WTC11 (cell line): ENCODE measurements at regions of chr15 and their contacts with region 1.

Region 1: DNA sequence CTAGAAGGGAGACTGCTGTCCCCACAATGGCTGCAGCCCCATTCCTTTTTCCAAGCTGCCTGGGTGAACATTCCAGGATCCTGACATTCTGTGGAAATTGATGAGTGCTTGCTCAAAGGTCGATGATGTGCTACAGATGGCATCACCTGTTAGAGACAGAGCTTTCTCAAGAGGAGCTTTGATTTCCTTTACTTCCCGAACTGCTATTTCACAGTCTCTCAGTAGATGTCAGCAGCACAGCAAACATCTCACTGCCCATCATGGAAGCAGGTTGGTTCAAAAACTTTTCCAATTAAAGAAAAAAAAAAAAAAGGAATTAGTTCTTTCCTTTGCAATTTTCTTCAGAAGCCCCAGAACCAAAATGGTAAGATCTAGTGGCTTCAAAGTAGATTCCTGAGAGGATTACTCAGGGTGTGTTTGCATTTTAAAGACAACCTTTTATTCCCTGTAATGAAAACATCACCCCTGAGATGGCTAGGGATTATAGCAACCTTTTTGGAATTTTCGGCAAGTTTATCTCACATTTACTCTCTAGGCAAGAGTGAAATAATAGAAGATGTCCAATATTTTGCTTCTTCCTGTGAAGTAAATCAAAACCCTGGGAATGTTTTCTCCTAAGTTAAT is 44.8 kb downstream of the POLR2M start:
- DNase-seq: no peak
- ATAC-seq: peak; percentile 48
- H3K4me3 Mint-ChIP-seq: no peak overlapping the region
- H3K27ac Mint-ChIP-seq: no peak overlapping the region
- H3K4me1 Mint-ChIP-seq: peaks cover 39% of the 10 kb centered on the region
- H3K27me3 Mint-ChIP-seq: peaks cover 4% of the 10 kb centered on the region; the same call in 1 of the 2 replicates
- CTCF ChIP-seq: no peak

Region 2: DNA sequence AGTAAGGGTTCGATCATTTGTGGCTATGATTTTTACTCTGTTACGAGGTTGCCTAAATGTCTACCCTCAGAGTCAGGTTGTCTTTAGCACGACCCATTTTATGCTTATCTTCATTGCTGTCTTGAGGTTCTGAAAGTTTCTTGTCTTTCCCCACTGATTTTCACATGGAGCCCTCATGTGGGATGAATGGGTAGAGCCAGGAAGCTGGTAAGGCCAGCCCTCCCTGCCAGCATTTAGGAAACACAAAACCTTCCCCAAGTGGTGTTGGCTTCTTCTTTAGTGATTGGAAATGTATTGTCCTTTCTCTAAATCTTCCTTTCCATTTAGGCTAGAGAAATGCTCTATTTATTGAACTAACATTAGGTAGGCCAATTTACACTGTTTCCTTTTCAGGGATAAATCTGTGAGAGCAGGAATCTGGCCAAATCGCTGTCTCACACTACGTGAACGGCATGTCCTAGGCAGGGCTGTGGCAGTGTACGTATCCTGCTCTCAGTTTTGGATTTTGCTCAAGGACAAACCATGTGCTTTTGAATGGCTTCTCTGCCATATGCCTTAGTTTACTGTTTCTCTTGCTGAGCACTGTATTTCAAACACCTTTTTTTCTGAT is 115.9 kb before region 1 on chr15:
- CTCF ChIA-PET with region 1: no interaction called
- POLR2A ChIA-PET with region 1: no interaction called
- DNase-seq: no peak
- ATAC-seq: peak; percentile 58
- H3K4me3 Mint-ChIP-seq: no peak overlapping the region
- H3K27ac Mint-ChIP-seq: no peak overlapping the region
- H3K4me1 Mint-ChIP-seq: no peaks in the 10 kb centered on the region
- H3K27me3 Mint-ChIP-seq: peaks cover 17% of the 10 kb centered on the region
- CTCF ChIP-seq: no peak

Region 3: DNA sequence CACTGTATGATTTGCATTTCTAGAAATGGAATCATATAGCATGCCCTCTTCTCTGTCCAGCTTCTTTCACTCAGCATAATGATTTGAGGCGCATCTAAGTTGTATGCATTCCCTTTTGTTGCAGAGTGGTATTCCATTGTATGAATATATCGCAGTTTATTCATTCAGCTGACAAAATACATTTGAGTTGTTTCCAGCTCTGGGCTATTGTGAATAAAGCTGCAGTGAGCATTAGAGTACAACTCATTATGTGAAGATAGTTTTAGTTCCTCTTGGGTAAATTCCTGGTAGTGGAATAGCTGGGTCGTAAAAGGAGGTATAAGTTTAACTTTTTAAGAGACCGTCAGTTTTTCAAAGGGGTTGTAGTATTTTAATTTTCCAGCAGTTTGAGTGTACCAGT is 83.3 kb before region 1 on chr15:
- CTCF ChIA-PET with region 1: no interaction called
- POLR2A ChIA-PET with region 1: no interaction called
- DNase-seq: no peak
- ATAC-seq: no peak
- H3K4me3 Mint-ChIP-seq: no peak overlapping the region
- H3K27ac Mint-ChIP-seq: no peak overlapping the region
- H3K4me1 Mint-ChIP-seq: no peaks in the 10 kb centered on the region
- H3K27me3 Mint-ChIP-seq: no peaks in the 10 kb centered on the region
- CTCF ChIP-seq: no peak

Region 4: DNA sequence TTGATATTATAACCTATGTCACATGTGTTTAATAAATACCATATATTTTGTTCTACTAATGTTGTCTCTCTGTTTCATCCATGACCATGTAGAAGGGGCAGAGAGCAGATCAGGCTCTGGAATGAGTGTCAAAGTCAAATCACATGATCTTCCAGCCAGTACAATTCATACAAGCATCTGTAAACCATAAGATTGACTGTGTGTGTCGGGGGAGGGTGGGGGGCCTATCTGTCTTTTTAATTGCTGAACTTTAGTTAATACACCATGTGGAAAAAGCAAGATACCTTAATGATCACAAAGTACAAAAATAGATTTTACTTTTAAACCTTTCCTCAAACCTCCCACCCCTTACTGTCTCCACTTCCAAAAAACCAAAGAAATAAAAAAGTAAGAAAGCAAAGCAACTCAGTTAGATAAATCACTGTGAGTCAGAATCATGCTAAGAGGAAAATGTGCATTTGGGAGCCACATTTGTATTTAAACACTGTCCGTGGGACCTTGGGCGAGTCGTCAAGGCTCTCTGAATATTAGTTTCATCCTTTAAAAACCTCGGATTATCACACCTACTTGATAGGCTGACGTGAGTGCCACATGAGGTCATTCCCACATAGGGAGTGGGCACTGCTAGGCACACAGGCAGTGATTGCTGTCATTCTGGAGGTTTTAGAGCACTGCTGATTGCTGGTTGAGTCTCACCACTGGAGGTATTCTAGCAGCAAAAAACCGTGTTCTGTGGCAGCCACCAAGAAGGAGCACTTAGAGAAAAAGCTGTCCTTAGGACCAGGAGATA is 65.8 kb before region 1 on chr15:
- CTCF ChIA-PET with region 1: no interaction called
- POLR2A ChIA-PET with region 1: no interaction called
- DNase-seq: no peak
- ATAC-seq: no peak
- H3K4me3 Mint-ChIP-seq: no peak overlapping the region
- H3K27ac Mint-ChIP-seq: no peak overlapping the region
- H3K4me1 Mint-ChIP-seq: no peaks in the 10 kb centered on the region
- H3K27me3 Mint-ChIP-seq: no peaks in the 10 kb centered on the region
- CTCF ChIP-seq: no peak

Region 5: GRCh38 chr15:57697588-57697987 is 53.7 kb before region 1 on chr15:
- CTCF ChIA-PET with region 1: no interaction called
- POLR2A ChIA-PET with region 1: no interaction called
- DNase-seq: no peak
- ATAC-seq: no peak
- H3K4me3 Mint-ChIP-seq: no peak overlapping the region
- H3K27ac Mint-ChIP-seq: no peak overlapping the region
- H3K4me1 Mint-ChIP-seq: no peaks in the 10 kb centered on the region
- H3K27me3 Mint-ChIP-seq: peaks cover 33% of the 10 kb centered on the region
- CTCF ChIP-seq: no peak

Region 6: GRCh38 chr15:57762302-57762701 is 11.0 kb after region 1 on chr15:
- CTCF ChIA-PET with region 1: interaction called, 38 read pairs
- POLR2A ChIA-PET with region 1: no interaction called
- DNase-seq: peak; percentile 28
- ATAC-seq: peak; percentile 75
- H3K4me3 Mint-ChIP-seq: no peak overlapping the region
- H3K27ac Mint-ChIP-seq: no peak overlapping the region
- H3K4me1 Mint-ChIP-seq: no peaks in the 10 kb centered on the region
- H3K27me3 Mint-ChIP-seq: no peaks in the 10 kb centered on the region
- CTCF ChIP-seq: peak; percentile 22; the same call in 1 of the 2 replicates

Region 7: GRCh38 chr15:57861036-57861638 is 109.8 kb after region 1 on chr15:
- CTCF ChIA-PET with region 1: interaction called, 134 read pairs
- POLR2A ChIA-PET with region 1: no interaction called
- DNase-seq: no peak
- ATAC-seq: no peak; the same call in 1 of the 2 replicates
- H3K4me3 Mint-ChIP-seq: no peak overlapping the region
- H3K27ac Mint-ChIP-seq: no peak overlapping the region
- H3K4me1 Mint-ChIP-seq: no peaks in the 10 kb centered on the region
- H3K27me3 Mint-ChIP-seq: no peaks in the 10 kb centered on the region; the same call in 1 of the 2 replicates
- CTCF ChIP-seq: peak; percentile 69

Region 8: GRCh38 chr15:58077427-58077826 is 326.1 kb after region 1 on chr15:
- CTCF ChIA-PET with region 1: interaction called, 11 read pairs
- POLR2A ChIA-PET with region 1: no interaction called
- DNase-seq: no peak
- ATAC-seq: peak; percentile 90
- H3K4me3 Mint-ChIP-seq: no peak overlapping the region
- H3K27ac Mint-ChIP-seq: no peak overlapping the region
- H3K4me1 Mint-ChIP-seq: peaks cover 28% of the 10 kb centered on the region
- H3K27me3 Mint-ChIP-seq: peaks cover 5% of the 10 kb centered on the region; the same call in 1 of the 2 replicates
- CTCF ChIP-seq: no peak